PC-9 (cell line): ENCODE measurements at regions of chr14 and their contacts with region 1.

Region 1: GRCh38 chr14:74401504-74402241 is 24.3 kb downstream of the SYNDIG1L start:
- DNase-seq: peak; percentile 70 to 74
- H3K4me3 ChIP-seq: peak overlapping the region; percentile 52
- H3K27ac ChIP-seq: peak overlapping the region; percentile 76
- H3K4me1 ChIP-seq: peaks cover 32% of the 10 kb centered on the region
- H3K27me3 ChIP-seq: no peaks in the 10 kb centered on the region
- CTCF ChIP-seq: 0 out of 2 replicates have a peak, but pooled peaks have one; percentile 18

Region 2: GRCh38 chr14:74389980-74390379 is 11.7 kb before region 1 on chr14:
- CTCF ChIA-PET with region 1: no interaction called
- POLR2A ChIA-PET with region 1: interaction called, 14 read pairs
- intact Hi-C with region 1: no loop called
- DNase-seq: no peak
- H3K4me3 ChIP-seq: no peak overlapping the region
- H3K27ac ChIP-seq: no peak overlapping the region
- H3K4me1 ChIP-seq: peaks cover 6% of the 10 kb centered on the region; the same call in 1 of the 2 replicates
- H3K27me3 ChIP-seq: no peaks in the 10 kb centered on the region
- CTCF ChIP-seq: no peak

Region 3: DNA sequence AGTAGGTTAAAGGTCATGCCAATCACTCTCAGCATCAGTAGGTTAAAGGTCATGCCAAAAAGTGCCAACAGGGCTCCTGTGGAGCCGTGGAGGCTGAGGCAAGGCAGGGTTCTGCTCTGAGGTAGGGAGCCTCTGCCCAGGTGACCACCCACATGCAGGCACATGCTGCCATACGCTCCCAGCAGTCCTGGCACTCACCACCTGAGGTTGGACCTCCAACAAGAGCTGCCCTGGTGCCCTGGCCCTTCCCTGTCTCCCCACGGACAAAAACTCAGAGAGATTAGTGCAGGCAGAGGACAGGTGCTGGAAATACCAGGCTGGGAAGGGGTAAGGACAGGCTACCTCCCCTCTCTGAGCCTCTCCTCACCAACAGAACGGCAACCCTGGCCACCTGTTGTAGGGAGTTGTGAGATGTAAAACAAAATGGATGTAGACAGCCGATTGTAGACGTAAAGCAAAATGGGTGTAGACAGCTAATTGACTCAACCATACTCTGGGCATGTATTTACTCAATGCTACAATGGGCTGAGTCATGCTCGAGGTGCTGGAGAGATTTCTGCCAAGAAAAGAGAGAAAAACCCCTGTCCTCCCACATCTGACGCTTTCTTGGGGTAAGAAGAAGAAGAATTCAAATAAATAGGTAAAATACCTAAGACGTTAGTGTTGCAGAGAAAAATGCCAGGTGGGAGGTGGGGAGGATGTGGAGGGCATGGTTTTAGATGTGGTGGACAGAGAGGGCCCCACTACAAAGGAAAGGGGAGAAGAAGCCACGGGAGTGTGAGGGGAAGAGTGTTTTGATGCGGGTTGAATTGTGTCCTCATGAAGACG is 178.0 kb after region 1 on chr14:
- CTCF ChIA-PET with region 1: no interaction called
- POLR2A ChIA-PET with region 1: interaction called, 21 read pairs
- intact Hi-C with region 1: no loop called
- DNase-seq: peak; percentile 84 to 98
- H3K4me3 ChIP-seq: no peak overlapping the region
- H3K27ac ChIP-seq: peak overlapping the region; percentile 94
- H3K4me1 ChIP-seq: peaks cover 85% of the 10 kb centered on the region
- H3K27me3 ChIP-seq: no peaks in the 10 kb centered on the region
- CTCF ChIP-seq: no peak

Region 4: DNA sequence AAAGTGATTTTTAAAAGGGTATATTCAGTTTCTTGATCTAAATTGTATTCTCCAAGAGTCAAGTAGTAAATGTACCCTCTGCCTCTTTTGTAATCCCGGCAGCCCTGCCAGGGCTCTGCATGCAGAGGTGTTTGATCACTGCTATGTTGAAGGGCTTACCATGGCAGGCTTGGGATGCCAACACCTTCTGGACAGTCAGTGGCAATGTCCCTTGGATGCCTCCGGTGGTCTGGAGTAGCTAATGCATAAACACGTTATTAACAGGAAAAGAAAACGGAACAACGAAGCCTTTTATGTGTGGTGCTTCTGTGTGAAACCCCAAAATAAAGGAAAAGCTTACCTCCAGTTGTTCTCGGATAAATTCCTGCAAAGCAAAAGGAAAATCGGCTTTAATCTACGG is 621.0 kb after region 1 on chr14:
- CTCF ChIA-PET with region 1: no interaction called
- POLR2A ChIA-PET with region 1: interaction called, 38 read pairs
- intact Hi-C with region 1: no loop called
- DNase-seq: peak in 1 of 2 experiments; percentile 56
- H3K4me3 ChIP-seq: no peak overlapping the region
- H3K27ac ChIP-seq: no peak overlapping the region
- H3K4me1 ChIP-seq: peaks cover 14% of the 10 kb centered on the region
- H3K27me3 ChIP-seq: no peaks in the 10 kb centered on the region
- CTCF ChIP-seq: peak; percentile 79